ENCODE measurements at regions of chr4 and their contacts with region 1.

Region 1: GRCh38 chr4:47562297-47562696 is 77.2 kb downstream of the ATP10D start:
- DNase-seq: peak in 3 of 5 donors; percentile 2 to 4 (median 4)
- H3K4me3 ChIP-seq: no peak overlapping the region
- H3K4me3 Mint-ChIP-seq: no peak overlapping the region
- H3K27ac ChIP-seq: no peak overlapping the region
- H3K27ac Mint-ChIP-seq: peak overlapping the region in 1 of 7 donors; percentile 1
- H3K4me1 ChIP-seq: peaks cover 14% of the 10 kb centered on the region
- H3K4me1 Mint-ChIP-seq: peaks cover 7 to 13% (median 9%) of the 10 kb centered on the region in 4 donors
- H3K27me3 ChIP-seq: no peaks in the 10 kb centered on the region
- H3K27me3 Mint-ChIP-seq: no peaks in the 10 kb centered on the region

Region 2: GRCh38 chr4:47383829-47384427 is 178.4 kb before region 1 on chr4:
- CTCF ChIA-PET with region 1: interaction called, 3 read pairs
- POLR2A ChIA-PET with region 1: no interaction called
- intact Hi-C with region 1: loop called (anchors 10 kb)
- DNase-seq: peak in 4 of 5 donors; percentile 4 to 23 (median 8)
- H3K4me3 ChIP-seq: no peak overlapping the region
- H3K4me3 Mint-ChIP-seq: no peak overlapping the region
- H3K27ac ChIP-seq: no peak overlapping the region
- H3K27ac Mint-ChIP-seq: no peak overlapping the region
- H3K4me1 ChIP-seq: no peaks in the 10 kb centered on the region
- H3K4me1 Mint-ChIP-seq: no peaks in the 10 kb centered on the region
- H3K27me3 ChIP-seq: no peaks in the 10 kb centered on the region
- H3K27me3 Mint-ChIP-seq: peaks cover 4 to 11% of the 10 kb centered on the region in 2 donors

Region 3: GRCh38 chr4:47463235-47463956 is 98.9 kb before region 1 on chr4 and contains the start of gene COMMD8:
- CTCF ChIA-PET with region 1: interaction called, 23 read pairs
- POLR2A ChIA-PET with region 1: no interaction called
- intact Hi-C with region 1: loop called (anchors 1 kb)
- DNase-seq: peak; percentile 96 to 98 (median 97)
- H3K4me3 ChIP-seq: peak within 1 kb of the TSS; percentile 48 to 92
- H3K4me3 Mint-ChIP-seq: peak within 1 kb of the TSS; percentile 88 to 92 (median 90)
- H3K27ac ChIP-seq: peak within 1 kb of the TSS; percentile 79
- H3K27ac Mint-ChIP-seq: peak within 1 kb of the TSS; percentile 90 to 99 (median 96)
- H3K4me1 ChIP-seq: peaks cover 24% of the 10 kb centered on the region
- H3K4me1 Mint-ChIP-seq: peaks cover 26 to 42% (median 36%) of the 10 kb centered on the region in 4 donors
- H3K27me3 ChIP-seq: no peaks in the 10 kb centered on the region
- H3K27me3 Mint-ChIP-seq: peaks cover 0 to 2% of the 10 kb centered on the region in 2 donors
- total RNA-seq, gene COMMD8: 14.6 to 18.3 TPM

Region 4: DNA sequence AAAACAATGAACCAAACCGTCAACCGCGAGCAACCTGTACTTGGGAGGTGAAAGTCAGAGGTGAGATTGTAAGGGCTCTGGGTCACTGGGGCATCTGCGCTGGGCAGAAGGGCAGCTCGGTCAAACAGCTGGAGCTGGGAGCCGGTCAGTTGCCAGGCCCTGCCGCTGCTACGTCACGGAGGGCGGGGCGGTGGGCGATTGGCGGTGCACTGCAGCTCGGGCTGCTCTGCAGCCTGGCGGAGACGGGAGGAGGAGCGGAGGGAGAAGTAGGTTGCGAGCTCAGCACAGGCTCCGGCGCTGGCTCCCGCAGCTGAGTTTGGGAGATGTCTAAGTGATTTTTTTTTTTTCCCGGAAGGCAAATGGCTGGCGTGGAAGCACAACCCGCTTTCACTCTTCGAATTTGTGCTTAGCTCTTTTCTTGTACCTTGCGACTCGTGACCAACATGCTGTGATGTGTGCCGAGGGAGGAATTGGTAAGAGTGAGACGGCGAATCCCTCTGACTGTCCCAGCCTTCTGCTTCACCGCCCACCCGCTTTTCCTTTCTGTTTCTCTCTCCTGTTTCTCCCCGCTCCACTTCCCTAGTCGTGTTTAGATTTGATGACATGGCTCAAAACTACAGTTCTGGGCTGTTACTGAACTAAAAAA is 77.1 kb before region 1 on chr4 and contains the start of gene ATP10D:
- CTCF ChIA-PET with region 1: interaction called, 9 read pairs
- POLR2A ChIA-PET with region 1: no interaction called
- intact Hi-C with region 1: loop called (anchors 2 kb)
- DNase-seq: peak; percentile 65 to 75 (median 67)
- H3K4me3 ChIP-seq: peak within 1 kb of the TSS; percentile 58 to 86
- H3K4me3 Mint-ChIP-seq: peak within 1 kb of the TSS; percentile 90 to 99 (median 95)
- H3K27ac ChIP-seq: peak within 1 kb of the TSS; percentile 46
- H3K27ac Mint-ChIP-seq: peak within 1 kb of the TSS; percentile 74 to 98 (median 94)
- H3K4me1 ChIP-seq: peaks cover 14% of the 10 kb centered on the region
- H3K4me1 Mint-ChIP-seq: peaks cover 7 to 32% (median 25%) of the 10 kb centered on the region in 4 donors
- H3K27me3 ChIP-seq: no peaks in the 10 kb centered on the region
- H3K27me3 Mint-ChIP-seq: no peaks in the 10 kb centered on the region
- total RNA-seq, gene ATP10D: 3.1 to 4.2 TPM

Region 5: DNA sequence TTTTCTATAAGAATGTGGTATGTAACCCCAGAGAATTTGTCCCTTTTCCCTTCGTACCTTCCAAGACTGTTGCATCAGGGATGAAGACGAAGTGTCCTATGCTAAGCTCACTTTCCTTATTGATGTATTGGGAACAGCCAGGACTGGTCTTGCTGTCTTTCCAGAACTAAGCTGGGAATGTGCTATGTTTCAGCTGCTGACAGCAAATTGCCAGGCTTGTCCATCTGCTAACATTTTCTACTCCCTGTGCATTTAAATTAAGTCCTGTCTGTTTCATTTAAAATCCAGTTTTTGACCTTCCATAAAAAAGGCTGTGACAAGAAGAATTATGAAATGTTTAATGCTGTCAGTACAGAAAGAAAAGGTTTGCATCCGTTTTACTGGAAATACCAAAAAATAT is 10.7 kb after region 1 on chr4:
- CTCF ChIA-PET with region 1: interaction called, 11 read pairs
- POLR2A ChIA-PET with region 1: no interaction called
- intact Hi-C with region 1: no loop called
- DNase-seq: no peak
- H3K4me3 ChIP-seq: no peak overlapping the region
- H3K4me3 Mint-ChIP-seq: no peak overlapping the region
- H3K27ac ChIP-seq: no peak overlapping the region
- H3K27ac Mint-ChIP-seq: no peak overlapping the region
- H3K4me1 ChIP-seq: no peaks in the 10 kb centered on the region
- H3K4me1 Mint-ChIP-seq: no peaks in the 10 kb centered on the region
- H3K27me3 ChIP-seq: no peaks in the 10 kb centered on the region
- H3K27me3 Mint-ChIP-seq: no peaks in the 10 kb centered on the region

Region 6: GRCh38 chr4:47933840-47934239 is 371.5 kb after region 1 on chr4:
- CTCF ChIA-PET with region 1: no interaction called
- POLR2A ChIA-PET with region 1: no interaction called
- intact Hi-C with region 1: loop called (anchors 5 kb)
- DNase-seq: peak in 4 of 5 donors; percentile 41 to 53 (median 50)
- H3K4me3 ChIP-seq: no peak overlapping the region
- H3K4me3 Mint-ChIP-seq: no peak overlapping the region
- H3K27ac ChIP-seq: no peak overlapping the region
- H3K27ac Mint-ChIP-seq: no peak overlapping the region
- H3K4me1 ChIP-seq: no peaks in the 10 kb centered on the region
- H3K4me1 Mint-ChIP-seq: peaks cover 5 to 7% (median 6%) of the 10 kb centered on the region in 4 donors
- H3K27me3 ChIP-seq: no peaks in the 10 kb centered on the region
- H3K27me3 Mint-ChIP-seq: peaks cover 0 to 1% of the 10 kb centered on the region in 2 donors

Measured in CD4-positive, alpha-beta memory T cell (primary cell).